PC-3 (cell line): ENCODE measurements at regions of chr1 and their contacts with region 1.

Region 1: DNA sequence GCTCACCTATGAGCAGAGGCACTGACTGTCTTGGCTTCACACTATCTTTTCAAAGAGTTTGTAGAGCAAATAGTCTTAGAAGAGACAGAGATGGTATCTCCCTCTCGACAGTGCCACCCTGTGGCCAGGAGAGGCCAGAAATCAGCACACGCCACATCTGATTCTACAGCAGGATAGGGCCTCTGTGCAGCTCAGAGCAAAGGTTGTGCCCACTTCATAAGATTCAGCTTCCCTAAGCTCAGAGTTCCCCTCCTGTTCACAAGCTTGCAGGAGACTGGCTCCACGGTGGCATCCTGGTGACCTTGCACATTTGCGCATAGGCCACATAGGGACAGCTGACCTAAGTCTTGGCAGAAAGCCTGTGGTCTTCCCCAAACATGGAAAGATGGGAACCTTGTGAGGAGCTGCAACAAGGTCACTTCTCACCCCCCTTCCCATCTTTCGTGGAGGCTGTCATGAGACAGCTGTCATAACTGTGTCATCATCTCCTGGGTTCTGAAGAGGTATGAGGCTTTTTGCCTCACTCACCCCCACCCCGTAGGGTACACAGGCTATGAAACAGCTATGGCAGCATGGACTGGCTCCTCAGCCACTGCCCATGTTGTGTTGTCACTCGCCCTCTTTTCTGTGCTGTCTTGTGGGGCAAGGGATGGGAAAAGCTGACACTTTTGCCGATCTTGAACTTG is 3.0 kb downstream of the ITLN2 start:
- DNase-seq: peak; percentile 91
- ATAC-seq: peak; percentile 77
- H3K4me3 ChIP-seq: no peak overlapping the region
- H3K27ac ChIP-seq: no peak overlapping the region
- H3K4me1 ChIP-seq: peaks cover 25% of the 10 kb centered on the region
- H3K27me3 ChIP-seq: no peaks in the 10 kb centered on the region
- CTCF ChIP-seq: peak; percentile 98

Region 2: GRCh38 chr1:160675641-160676410 is 275.8 kb before region 1 on chr1:
- CTCF ChIA-PET with region 1: no interaction called
- POLR2A ChIA-PET with region 1: no interaction called
- intact Hi-C with region 1: loop called (anchors 1 kb)
- DNase-seq: peak; percentile 78
- ATAC-seq: peak; percentile 99
- H3K4me3 ChIP-seq: no peak overlapping the region
- H3K27ac ChIP-seq: no peak overlapping the region
- H3K4me1 ChIP-seq: no peaks in the 10 kb centered on the region
- H3K27me3 ChIP-seq: peaks cover 60% of the 10 kb centered on the region
- CTCF ChIP-seq: peak; percentile 95

Region 3: GRCh38 chr1:160726498-160727315 is 224.9 kb before region 1 on chr1:
- CTCF ChIA-PET with region 1: interaction called, 6 read pairs
- POLR2A ChIA-PET with region 1: no interaction called
- intact Hi-C with region 1: loop called (anchors 1 kb)
- DNase-seq: peak; percentile 93
- ATAC-seq: peak; percentile 90
- H3K4me3 ChIP-seq: no peak overlapping the region
- H3K27ac ChIP-seq: peak overlapping the region; percentile 69
- H3K4me1 ChIP-seq: peaks cover 18% of the 10 kb centered on the region
- H3K27me3 ChIP-seq: peaks cover 5% of the 10 kb centered on the region; the same call in 1 of the 2 replicates
- CTCF ChIP-seq: peak; percentile 99

Region 4: DNA sequence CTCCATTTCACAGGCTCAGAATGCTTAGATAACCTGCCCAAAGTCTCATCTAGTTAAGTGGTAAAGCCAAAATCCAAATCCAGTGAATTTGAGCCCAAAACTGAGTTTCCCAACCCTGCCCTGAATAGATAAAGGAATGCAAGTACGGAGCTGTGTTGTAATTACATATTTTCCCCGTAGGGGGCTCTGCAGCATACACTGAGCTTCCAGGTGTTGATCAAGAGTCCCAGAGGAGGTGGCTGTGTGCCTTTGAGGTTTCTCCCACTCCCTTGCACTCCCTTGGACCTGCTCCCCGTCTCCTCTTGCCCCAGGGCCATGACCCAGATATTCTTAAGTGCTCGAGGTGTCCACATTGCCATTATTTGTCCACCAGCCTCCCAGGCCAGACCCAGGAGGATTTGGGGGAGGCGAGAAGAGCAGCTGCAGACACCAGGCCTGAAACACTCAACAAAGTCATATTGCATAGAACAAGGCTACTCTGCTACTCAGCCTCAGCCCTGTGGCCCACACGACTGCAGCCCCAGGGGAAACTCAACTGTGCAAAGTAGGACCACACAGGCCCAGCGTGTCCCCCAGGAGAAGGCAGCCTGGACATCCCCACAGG is 174.0 kb before region 1 on chr1:
- CTCF ChIA-PET with region 1: interaction called, 8 read pairs
- POLR2A ChIA-PET with region 1: no interaction called
- intact Hi-C with region 1: loop called (anchors 2 kb)
- DNase-seq: peak; percentile 70
- ATAC-seq: peak; percentile 53; the same call in 1 of the 2 replicates
- H3K4me3 ChIP-seq: no peak overlapping the region
- H3K27ac ChIP-seq: no peak overlapping the region
- H3K4me1 ChIP-seq: peaks cover 28% of the 10 kb centered on the region
- H3K27me3 ChIP-seq: no peaks in the 10 kb centered on the region
- CTCF ChIP-seq: peak; percentile 75

Region 5: GRCh38 chr1:160830321-160831153 is 121.0 kb before region 1 on chr1:
- CTCF ChIA-PET with region 1: interaction called, 14 read pairs
- POLR2A ChIA-PET with region 1: no interaction called
- intact Hi-C with region 1: loop called (anchors 1 kb)
- DNase-seq: peak; percentile 93
- ATAC-seq: peak; percentile 60
- H3K4me3 ChIP-seq: no peak overlapping the region
- H3K27ac ChIP-seq: no peak overlapping the region
- H3K4me1 ChIP-seq: peaks cover 43% of the 10 kb centered on the region
- H3K27me3 ChIP-seq: no peaks in the 10 kb centered on the region
- CTCF ChIP-seq: peak; percentile 98

Region 6: GRCh38 chr1:160916666-160917065 is 34.9 kb before region 1 on chr1:
- CTCF ChIA-PET with region 1: interaction called, 9 read pairs
- POLR2A ChIA-PET with region 1: no interaction called
- intact Hi-C with region 1: loop called (anchors 2 kb)
- DNase-seq: peak; percentile 98
- ATAC-seq: peak; percentile 94
- H3K4me3 ChIP-seq: no peak overlapping the region
- H3K27ac ChIP-seq: peak overlapping the region; percentile 94
- H3K4me1 ChIP-seq: peaks cover 19% of the 10 kb centered on the region
- H3K27me3 ChIP-seq: no peaks in the 10 kb centered on the region
- CTCF ChIP-seq: no peak

Region 7: DNA sequence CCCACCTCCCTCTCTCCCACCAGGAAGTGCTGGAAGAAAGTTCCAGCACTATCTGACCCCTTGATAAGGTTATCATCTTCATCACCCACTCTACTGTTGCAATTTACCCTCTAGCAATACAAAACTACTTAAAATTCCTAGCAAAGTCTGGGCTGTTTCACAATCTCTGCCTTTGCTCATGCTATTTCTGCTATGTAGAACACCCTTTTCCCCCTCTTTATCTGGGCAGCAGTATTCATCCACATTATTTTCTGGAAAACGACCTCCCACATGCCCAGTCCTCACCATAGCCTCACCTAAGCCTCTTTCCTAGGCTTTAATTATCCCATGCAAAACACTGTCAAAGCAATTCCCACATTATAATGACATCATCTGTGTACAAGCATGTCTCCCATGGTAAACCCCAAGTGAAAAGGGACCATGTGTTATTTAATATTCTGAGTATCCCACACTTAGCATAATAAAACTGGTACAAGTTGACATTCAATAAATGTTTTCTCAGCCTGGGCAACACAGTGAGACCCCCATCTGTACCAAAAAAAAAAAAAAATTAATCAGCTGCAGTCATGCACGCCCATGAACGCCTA is 57.4 kb after region 1 on chr1:
- CTCF ChIA-PET with region 1: no interaction called
- POLR2A ChIA-PET with region 1: no interaction called
- intact Hi-C with region 1: no loop called
- DNase-seq: no peak
- ATAC-seq: no peak
- H3K4me3 ChIP-seq: no peak overlapping the region
- H3K27ac ChIP-seq: no peak overlapping the region
- H3K4me1 ChIP-seq: peaks cover 12% of the 10 kb centered on the region
- H3K27me3 ChIP-seq: no peaks in the 10 kb centered on the region
- CTCF ChIP-seq: no peak

Region 8: DNA sequence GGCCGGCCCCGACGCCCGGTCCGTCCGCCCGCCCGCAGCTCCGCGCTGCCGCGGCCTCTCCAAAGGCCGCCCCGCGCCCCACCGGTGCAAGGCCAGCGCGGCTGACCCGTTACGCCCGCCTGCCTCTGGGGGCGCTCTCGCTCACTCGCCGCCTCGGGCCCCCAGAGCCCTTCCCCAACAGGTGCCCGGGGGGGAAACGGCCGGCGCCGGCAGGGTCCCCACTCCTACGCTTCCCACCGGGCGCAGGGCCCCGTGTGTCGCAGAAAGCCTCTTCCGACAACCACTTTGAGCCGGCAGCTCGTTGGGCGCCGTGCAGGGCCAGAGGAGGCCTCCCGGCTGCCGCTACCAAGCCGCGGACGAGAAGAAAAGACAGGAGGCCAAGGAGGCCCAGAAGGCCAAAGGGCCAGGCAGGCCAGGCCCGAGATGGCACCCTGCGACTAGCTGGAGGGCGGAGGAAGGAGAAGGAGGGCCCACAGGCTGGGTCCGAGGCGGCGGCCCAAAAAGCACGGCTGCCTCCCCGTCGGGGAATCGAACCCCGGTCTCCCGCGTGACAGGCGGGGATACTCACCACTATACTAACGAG is 488.8 kb after region 1 on chr1:
- CTCF ChIA-PET with region 1: no interaction called
- POLR2A ChIA-PET with region 1: no interaction called
- intact Hi-C with region 1: no loop called
- DNase-seq: peak; percentile 84
- ATAC-seq: peak; percentile 57
- H3K4me3 ChIP-seq: peak overlapping the region; percentile 79
- H3K27ac ChIP-seq: peak overlapping the region; percentile 60
- H3K4me1 ChIP-seq: peaks cover 7% of the 10 kb centered on the region
- H3K27me3 ChIP-seq: no peaks in the 10 kb centered on the region
- CTCF ChIP-seq: peak; percentile 73